Heart left ventricle (tissue), 16 donors: ENCODE measurements at regions of chr11 and their contacts with region 1.

Region 1: DNA sequence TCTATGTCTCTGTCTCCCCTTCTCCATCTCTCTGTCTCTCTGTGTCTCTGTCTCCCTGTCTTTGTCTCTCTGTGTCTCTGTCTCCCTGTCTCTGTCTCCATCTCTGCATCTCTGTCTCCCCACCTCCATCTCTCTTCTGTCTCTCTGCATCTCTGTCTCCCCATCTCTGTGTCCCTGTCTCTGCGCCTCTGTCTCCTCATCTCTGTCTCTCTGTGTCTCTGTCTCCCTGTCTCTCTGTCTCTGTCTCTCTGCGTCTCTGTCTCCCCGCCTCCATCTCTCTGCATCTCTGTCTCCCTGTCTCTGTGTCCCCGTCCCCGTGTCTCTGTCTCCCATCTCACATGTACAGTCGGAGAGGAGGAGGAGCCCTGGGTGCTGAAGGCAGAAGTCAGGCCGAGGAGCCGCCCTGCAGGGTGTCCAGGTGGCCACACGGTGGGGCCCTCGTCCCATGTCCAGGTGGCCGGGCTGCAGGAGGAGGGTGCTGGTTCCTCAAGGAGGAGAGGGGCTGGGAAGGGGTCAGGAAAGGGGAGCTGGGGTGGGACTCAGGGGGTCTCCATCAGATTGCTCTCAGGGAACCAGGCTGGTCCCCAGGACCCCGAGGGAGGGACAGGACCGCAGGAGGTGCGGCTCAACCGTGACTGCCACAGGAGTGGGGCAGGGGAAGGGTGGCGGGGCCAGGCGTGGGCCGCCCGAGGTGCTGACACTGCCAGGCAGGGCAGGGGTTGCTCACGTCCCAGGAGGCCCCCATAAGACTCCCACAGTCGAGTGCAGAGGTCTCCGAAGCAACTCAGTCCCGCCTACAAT is 25.6 kb upstream of the TH start:
- DNase-seq: peak; percentile 67 to 84 (median 75)
- ATAC-seq: peak; percentile 60 to 87 (median 72)
- H3K4me3 ChIP-seq: no peak overlapping the region
- H3K27ac ChIP-seq: no peak overlapping the region
- H3K4me1 ChIP-seq: peaks cover 0 to 6% (median 0%) of the 10 kb centered on the region in 12 donors
- H3K27me3 ChIP-seq: peaks cover 0 to 18% (median 0%) of the 10 kb centered on the region in 9 donors
- CTCF ChIP-seq: peak; percentile 59 to 85 (median 76)
- POLR2A ChIP-seq: no peak

Region 2: GRCh38 chr11:2298795-2299761 is 101.9 kb after region 1 on chr11:
- intact Hi-C with region 1: loop called (anchors 2 to 5 kb)
- DNase-seq: peak in 2 of 5 donors; percentile 21 to 62
- ATAC-seq: no peak
- H3K4me3 ChIP-seq: no peak overlapping the region
- H3K27ac ChIP-seq: peak overlapping the region in 3 of 12 donors; percentile 3 to 23 (median 10)
- H3K4me1 ChIP-seq: peaks cover 0 to 49% (median 12%) of the 10 kb centered on the region in 12 donors
- H3K27me3 ChIP-seq: no peaks in the 10 kb centered on the region
- CTCF ChIP-seq: peak in 10 of 12 donors; percentile 12 to 42 (median 26)
- POLR2A ChIP-seq: no peak

Region 3: DNA sequence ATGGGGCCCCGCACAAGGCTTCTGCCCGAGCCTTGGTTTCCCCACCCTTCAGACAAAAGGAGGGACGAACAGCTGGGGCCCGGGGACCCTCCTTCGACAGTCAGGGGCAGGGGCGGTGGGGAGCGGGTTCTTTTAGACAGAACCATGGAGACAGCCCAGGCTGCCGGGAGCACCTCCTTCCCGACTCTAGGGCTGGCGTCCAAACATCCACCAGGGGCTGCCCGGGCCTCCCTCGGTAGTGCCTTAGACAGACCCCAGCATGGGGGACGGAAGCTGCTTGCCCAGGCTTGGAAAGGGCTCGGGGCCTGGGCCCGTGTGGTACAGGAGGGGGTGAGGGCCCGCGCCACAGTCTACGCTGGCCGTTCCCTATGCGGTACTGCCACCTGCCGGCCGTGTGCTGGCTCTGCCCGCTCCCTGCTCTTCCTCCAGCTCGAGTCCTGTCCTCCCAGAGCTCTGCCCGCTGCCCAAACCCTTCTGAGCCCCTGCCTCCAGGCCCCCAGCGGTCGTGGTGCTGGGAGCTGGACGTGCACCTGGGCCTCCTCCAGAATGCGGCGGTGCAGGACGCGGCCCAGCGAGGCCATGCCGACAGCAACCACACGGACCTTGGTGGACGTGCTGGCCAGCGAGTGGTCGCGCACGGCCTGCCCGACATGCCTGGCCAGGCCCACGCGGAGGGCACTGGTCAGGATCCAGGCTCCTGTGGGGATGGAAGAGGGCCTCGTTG is 223.5 kb after region 1 on chr11:
- intact Hi-C with region 1: loop called (anchors 1 to 2 kb)
- DNase-seq: peak; percentile 66 to 89 (median 74)
- ATAC-seq: peak; percentile 85 to 95 (median 92)
- H3K4me3 ChIP-seq: peak overlapping the region in 2 of 12 donors; percentile 16 to 18
- H3K27ac ChIP-seq: peak overlapping the region in 1 of 12 donors; percentile 24
- H3K4me1 ChIP-seq: peaks cover 0 to 13% (median 0%) of the 10 kb centered on the region in 12 donors
- H3K27me3 ChIP-seq: peaks cover 0 to 13% (median 0%) of the 10 kb centered on the region in 9 donors
- CTCF ChIP-seq: peak; percentile 89 to 97 (median 93)
- POLR2A ChIP-seq: no peak

Region 4: GRCh38 chr11:2526808-2527381 is 329.7 kb after region 1 on chr11:
- intact Hi-C with region 1: loop called in 5 of 10 experiments (anchors 5 to 10 kb)
- DNase-seq: peak; percentile 51 to 81 (median 60)
- ATAC-seq: peak in 2 of 4 donors; percentile 24 to 51
- H3K4me3 ChIP-seq: peak overlapping the region in 5 of 12 donors; percentile 2 to 33 (median 23)
- H3K27ac ChIP-seq: peak overlapping the region in 3 of 12 donors; percentile 17 to 52 (median 29)
- H3K4me1 ChIP-seq: peaks cover 0 to 30% (median 10%) of the 10 kb centered on the region in 12 donors
- H3K27me3 ChIP-seq: no peaks in the 10 kb centered on the region
- CTCF ChIP-seq: peak in 3 of 12 donors; percentile 6 to 24 (median 19)
- POLR2A ChIP-seq: no peak

Region 5: GRCh38 chr11:2892215-2893020 is 695.2 kb after region 1 on chr11:
- intact Hi-C with region 1: loop called in 3 of 10 experiments (anchors 10 kb)
- DNase-seq: peak; percentile 63 to 84 (median 79)
- ATAC-seq: peak in 3 of 4 donors; percentile 44 to 70 (median 59)
- H3K4me3 ChIP-seq: peak overlapping the region in 11 of 12 donors; percentile 2 to 67 (median 52)
- H3K27ac ChIP-seq: peak overlapping the region in 10 of 12 donors; percentile 33 to 83 (median 50)
- H3K4me1 ChIP-seq: peaks cover 5 to 39% (median 25%) of the 10 kb centered on the region in 12 donors
- H3K27me3 ChIP-seq: peaks cover 0 to 2% (median 0%) of the 10 kb centered on the region in 9 donors
- CTCF ChIP-seq: peak; percentile 87 to 96 (median 92)
- POLR2A ChIP-seq: no peak